Aorta (tissue), 5 donors: ENCODE measurements at regions of chr2 and their contacts with region 1.

Region 1: DNA sequence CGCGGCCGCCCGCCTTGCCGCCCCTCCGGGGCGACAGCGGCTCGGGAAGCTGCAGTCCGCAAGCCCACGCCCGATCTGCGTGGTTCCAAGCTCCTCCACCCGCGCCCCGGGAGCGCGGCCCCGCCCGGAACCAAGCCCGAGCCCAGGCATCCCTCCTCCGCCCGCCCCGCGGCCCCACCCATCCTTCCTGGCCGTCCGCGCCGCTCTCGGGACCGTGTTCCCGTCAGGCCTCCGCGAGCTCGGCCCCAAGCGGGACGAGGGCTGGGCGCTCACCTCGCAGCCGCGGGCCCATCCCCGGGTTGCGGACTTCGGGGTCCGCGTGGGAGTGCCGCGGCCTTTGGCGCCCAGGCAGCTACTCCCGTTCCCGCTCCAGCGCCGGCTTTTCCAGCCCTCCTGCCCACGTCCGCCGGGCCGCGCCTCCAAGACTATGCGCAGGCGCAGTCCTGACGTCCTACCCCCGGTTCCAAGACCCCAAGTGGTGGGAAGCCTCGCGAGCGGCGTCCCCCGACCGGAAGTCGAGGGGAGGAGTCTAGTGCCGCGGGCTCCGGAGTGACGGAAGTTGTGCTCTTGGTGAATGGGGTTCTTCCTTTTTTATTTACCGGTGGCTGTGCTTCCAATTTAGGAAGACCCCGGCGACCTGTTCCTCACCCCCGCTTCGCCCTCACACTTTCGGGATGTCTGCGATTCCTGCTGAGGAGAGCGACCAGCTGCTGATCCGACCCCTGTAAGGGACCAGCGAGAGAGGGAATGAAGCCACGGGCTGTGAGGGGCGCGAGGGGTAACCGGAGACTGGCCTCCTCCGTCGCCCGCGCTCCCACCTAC is at the starts of genes CPSF3 and ITGB1BP1:
- DNase-seq: peak; percentile 99
- ATAC-seq: peak; percentile 99
- H3K4me3 ChIP-seq: peak within 1 kb of the TSS; percentile 77 to 88
- H3K27ac ChIP-seq: peak within 1 kb of the TSS in 1 of 2 donors; percentile 67
- H3K4me1 ChIP-seq: peaks cover 1 to 5% of the 10 kb centered on the region in 2 donors
- H3K27me3 ChIP-seq: no peaks in the 10 kb centered on the region
- total RNA-seq, gene CPSF3: 16.2 to 20.4 TPM
- total RNA-seq, gene ITGB1BP1: 112 to 121 TPM

Region 2: GRCh38 chr2:9474361-9474967 is 51.2 kb after region 1 on chr2 and contains the start of gene IAH1:
- intact Hi-C with region 1: loop called in 1 of 2 experiments (anchors 5 kb)
- DNase-seq: peak; percentile 75 to 90
- ATAC-seq: peak; percentile 88
- H3K4me3 ChIP-seq: peak within 1 kb of the TSS; percentile 60 to 67
- H3K27ac ChIP-seq: peak within 1 kb of the TSS; percentile 8 to 66
- H3K4me1 ChIP-seq: peaks cover 0 to 3% of the 10 kb centered on the region in 2 donors
- H3K27me3 ChIP-seq: no peaks in the 10 kb centered on the region
- total RNA-seq, gene IAH1: 45.6 to 52.2 TPM

Region 3: GRCh38 chr2:9941196-9941995 is 518.1 kb after region 1 on chr2:
- intact Hi-C with region 1: no loop called
- DNase-seq: no peak
- ATAC-seq: no peak
- H3K4me3 ChIP-seq: no peak overlapping the region
- H3K27ac ChIP-seq: no peak overlapping the region
- H3K4me1 ChIP-seq: no peaks in the 10 kb centered on the region
- H3K27me3 ChIP-seq: no peaks in the 10 kb centered on the region